ENCODE measurements at regions of chr14 and their contacts with region 1.

Region 1: GRCh38 chr14:82438436-82438835 is 904.8 kb upstream of the SEL1L start:
- DNase-seq: no peak
- ATAC-seq: no peak
- H3K4me3 ChIP-seq: no peak overlapping the region
- H3K4me3 Mint-ChIP-seq: no peak overlapping the region
- H3K27ac ChIP-seq: no peak overlapping the region
- H3K27ac Mint-ChIP-seq: no peak overlapping the region
- H3K4me1 ChIP-seq: no peaks in the 10 kb centered on the region
- H3K4me1 Mint-ChIP-seq: no peaks in the 10 kb centered on the region
- H3K27me3 ChIP-seq: no peaks in the 10 kb centered on the region
- H3K27me3 Mint-ChIP-seq: no peaks in the 10 kb centered on the region
- CTCF ChIP-seq: no peak

Region 2: GRCh38 chr14:82482345-82482744 is 43.9 kb after region 1 on chr14:
- CTCF ChIA-PET with region 1: no interaction called
- POLR2A ChIA-PET with region 1: no interaction called
- intact Hi-C with region 1: loop called in 1 of 2 experiments (anchors 1 kb)
- DNase-seq: no peak
- ATAC-seq: no peak
- H3K4me3 ChIP-seq: no peak overlapping the region
- H3K4me3 Mint-ChIP-seq: no peak overlapping the region
- H3K27ac ChIP-seq: no peak overlapping the region
- H3K27ac Mint-ChIP-seq: no peak overlapping the region
- H3K4me1 ChIP-seq: no peaks in the 10 kb centered on the region
- H3K4me1 Mint-ChIP-seq: no peaks in the 10 kb centered on the region
- H3K27me3 ChIP-seq: no peaks in the 10 kb centered on the region
- H3K27me3 Mint-ChIP-seq: no peaks in the 10 kb centered on the region
- CTCF ChIP-seq: no peak